Posterior cingulate gyrus (tissue), 11 donors: ENCODE measurements at regions of chr10 and their contacts with region 1.

Region 1: DNA sequence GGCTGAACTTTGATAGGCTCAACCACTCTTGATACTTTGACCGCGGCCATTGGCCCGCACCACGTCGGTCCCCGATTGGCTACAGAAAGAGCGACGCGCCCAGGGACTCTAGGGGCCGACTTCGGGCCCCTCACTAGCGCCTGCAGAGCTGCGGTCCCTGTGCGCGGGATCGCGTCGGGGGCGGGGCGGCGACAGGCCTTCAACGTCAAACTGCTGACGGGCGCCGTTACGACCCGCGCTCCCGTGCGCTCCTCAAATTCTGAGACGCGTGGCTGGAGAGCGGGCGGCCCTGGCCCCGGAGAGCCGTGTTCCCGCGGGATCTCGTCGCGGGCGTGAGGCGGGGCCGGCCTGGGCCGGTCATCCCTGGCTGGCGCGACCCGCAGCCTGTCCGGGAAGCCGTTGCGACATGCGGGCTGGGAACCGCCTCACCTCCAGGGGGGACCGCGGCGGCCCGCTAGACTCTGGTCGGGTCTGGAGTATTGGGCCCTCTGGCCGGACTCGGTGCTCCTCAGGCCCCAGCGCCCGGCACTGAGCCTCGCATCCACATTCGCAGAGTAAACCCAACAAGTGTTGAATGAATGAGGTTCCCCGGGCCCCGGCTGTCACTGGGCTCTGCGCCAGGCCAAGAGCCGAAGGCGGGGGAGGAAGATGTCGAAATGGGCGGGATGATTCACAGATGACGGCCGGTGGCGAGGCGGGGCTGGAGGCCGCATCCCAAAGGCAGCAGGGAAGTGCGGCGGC is 644 bp upstream of the SLC25A28 start:
- DNase-seq: peak; percentile 81 to 99 (median 90)

Region 2: GRCh38 chr10:99659031-99659867 is 38.4 kb after region 1 on chr10 and contains the start of gene ENTPD7:
- intact Hi-C with region 1: loop called (anchors 2 kb)
- DNase-seq: peak; percentile 77 to 99 (median 95)

Region 3: DNA sequence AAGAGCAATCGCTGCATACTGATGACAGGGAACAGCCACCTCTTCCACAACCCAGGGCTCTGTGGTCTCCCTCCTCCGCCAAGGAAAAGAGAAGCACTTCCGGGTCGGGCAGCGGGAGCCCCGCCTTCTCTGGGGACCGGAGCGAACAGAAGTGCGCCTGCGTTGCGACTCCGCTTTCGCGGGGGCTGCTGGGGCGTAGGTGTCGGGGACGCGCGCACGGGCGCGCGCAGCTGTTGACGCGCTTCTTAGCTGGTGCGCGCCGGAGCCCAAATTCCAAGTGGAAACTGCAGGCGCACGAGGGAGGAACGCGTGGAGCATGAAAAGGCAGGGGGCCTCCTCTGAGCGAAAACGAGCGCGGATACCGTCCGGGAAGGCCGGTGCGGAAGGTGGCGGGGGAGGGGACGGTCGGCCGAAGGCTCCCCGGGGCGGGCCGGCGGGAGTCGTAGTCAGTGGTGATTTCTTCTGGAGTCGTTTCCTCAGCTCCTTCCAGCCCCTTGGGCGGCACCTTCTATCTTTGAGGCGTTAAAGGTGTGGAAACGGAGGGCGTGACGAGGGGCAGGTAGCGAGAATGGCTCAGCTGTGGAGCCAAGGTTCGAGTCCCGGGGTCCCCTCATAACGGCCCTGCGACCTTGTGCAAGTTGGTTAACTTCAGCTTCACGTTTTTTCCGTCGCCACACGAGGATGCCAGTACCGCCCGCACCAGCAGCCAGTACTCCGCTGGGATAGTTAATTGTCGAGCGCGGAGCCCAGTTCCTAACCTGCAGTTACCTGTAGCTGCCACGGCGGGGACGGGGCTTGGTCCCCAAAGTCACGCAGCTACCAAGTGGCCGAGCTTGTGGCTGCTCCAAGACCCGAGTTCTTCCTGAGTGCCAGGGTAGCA is 111.4 kb after region 1 on chr10 and contains the starts of genes COX15 and CUTC:
- intact Hi-C with region 1: loop called (anchors 5 kb)
- DNase-seq: peak; percentile 93 to 99 (median 97)